GM12878 (cell line): ENCODE measurements at regions of chr5 and their contacts with region 1.

Region 1: GRCh38 chr5:14809369-14810155 is 62.0 kb downstream of the ANKH start:
- DNase-seq: peak; percentile 88
- ATAC-seq: peak; percentile 97
- H3K4me3 ChIP-seq: peak overlapping the region; percentile 50; the same call in 1 of the 2 replicates
- H3K27ac ChIP-seq: peak overlapping the region; percentile 79
- H3K4me1 ChIP-seq: peaks cover 19% of the 10 kb centered on the region
- H3K27me3 ChIP-seq: no peaks in the 10 kb centered on the region
- CTCF ChIP-seq: no peak
- EP300 ChIP-seq: peak; percentile 92 to 96
- POLR2A ChIP-seq: 0 out of 2 replicates have a peak, but pooled peaks have one; percentile 40
- RAD21 ChIP-seq: peak; percentile 20; the same call in 1 of the 2 replicates

Region 2: GRCh38 chr5:14676320-14676719 is 133.2 kb before region 1 on chr5:
- CTCF ChIA-PET with region 1: no interaction called
- POLR2A ChIA-PET with region 1: no interaction called
- RAD21 ChIA-PET with region 1: interaction called, 3 read pairs
- SMC1A ChIA-PET with region 1: interaction called, 4 read pairs
- in situ Hi-C with region 1: no loop called
- intact Hi-C with region 1: loop called (anchors 5 kb)
- DNase-seq: no peak
- ATAC-seq: peak; percentile 67
- H3K4me3 ChIP-seq: peak overlapping the region; percentile 62; the same call in 1 of the 2 replicates
- H3K27ac ChIP-seq: peak overlapping the region; percentile 71
- H3K4me1 ChIP-seq: peaks cover 76% of the 10 kb centered on the region
- H3K27me3 ChIP-seq: no peaks in the 10 kb centered on the region
- CTCF ChIP-seq: no peak
- EP300 ChIP-seq: no peak
- POLR2A ChIP-seq: peak; percentile 37; the same call in 1 of the 2 replicates
- RAD21 ChIP-seq: no peak

Region 3: DNA sequence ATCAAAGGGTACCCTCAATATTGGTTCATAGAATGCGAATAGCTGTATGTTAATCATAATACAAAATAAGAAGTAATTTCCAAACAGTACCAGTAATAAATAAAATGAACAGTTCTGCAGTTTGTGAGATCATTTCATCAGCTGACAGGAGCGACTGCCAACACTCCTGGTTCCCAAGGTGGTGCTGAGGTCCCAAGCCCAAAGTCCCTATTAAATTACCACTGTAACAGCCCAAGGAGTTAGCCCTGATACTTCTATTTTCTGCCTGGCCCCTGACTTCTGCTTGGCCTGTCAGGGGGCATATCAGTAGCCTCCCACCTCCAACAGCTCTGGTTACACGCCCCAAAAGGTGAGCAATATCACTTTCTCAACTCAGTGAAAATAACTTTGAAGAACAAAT is 14.9 kb after region 1 on chr5:
- CTCF ChIA-PET with region 1: interaction called, 4 read pairs
- POLR2A ChIA-PET with region 1: interaction called, 4 read pairs
- RAD21 ChIA-PET with region 1: no interaction called
- SMC1A ChIA-PET with region 1: interaction called, 18 read pairs
- in situ Hi-C with region 1: no loop called
- intact Hi-C with region 1: no loop called
- DNase-seq: no peak
- ATAC-seq: no peak; the same call in 2 of the 3 replicates
- H3K4me3 ChIP-seq: no peak overlapping the region
- H3K27ac ChIP-seq: no peak overlapping the region
- H3K4me1 ChIP-seq: no peaks in the 10 kb centered on the region
- H3K27me3 ChIP-seq: no peaks in the 10 kb centered on the region
- CTCF ChIP-seq: no peak
- EP300 ChIP-seq: no peak
- POLR2A ChIP-seq: no peak
- RAD21 ChIP-seq: no peak

Region 4: DNA sequence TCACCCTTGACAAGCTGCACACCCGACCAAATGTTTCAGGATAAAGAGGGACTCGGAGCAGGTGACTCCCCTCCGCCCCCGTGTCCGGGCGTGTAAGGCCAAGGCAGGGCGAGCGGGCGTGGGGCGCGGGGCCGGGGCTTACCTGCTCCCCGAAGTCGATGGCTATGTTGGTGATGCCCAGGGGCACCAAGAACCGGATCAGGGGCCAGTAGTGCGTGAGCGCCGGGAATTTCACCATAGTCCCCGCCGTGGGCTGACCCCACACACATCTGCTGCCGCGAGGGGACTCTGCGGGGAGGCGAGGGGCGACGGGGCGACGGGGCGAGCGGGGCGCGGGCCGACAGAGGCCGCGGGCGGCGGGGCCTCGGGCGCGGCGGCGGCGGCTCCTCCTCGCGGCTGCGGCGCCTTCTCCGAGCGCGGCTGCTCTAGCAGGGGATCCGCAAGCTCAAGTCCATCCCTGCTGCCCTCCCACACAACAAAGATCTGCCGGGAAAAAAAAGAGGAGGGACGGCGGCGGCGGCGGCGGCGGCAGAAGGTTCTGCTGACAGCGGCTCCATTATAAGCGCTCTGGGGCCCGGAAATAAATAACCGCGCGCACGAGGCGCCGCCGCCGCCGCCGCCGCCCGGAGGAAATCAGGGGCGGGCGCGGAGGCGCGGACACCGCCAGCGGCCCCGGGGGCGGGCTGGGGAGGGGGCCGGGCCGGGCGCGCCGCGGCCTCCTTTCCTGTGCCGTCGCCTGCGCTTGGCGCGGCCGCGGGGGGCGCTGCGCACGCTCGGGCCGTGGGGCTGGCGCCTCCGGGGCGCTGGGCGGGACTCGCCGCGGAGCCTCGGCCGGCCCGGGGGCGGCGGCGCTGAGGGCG is 61.9 kb after region 1 on chr5 and contains the start of gene ANKH:
- CTCF ChIA-PET with region 1: interaction called, 3 read pairs
- POLR2A ChIA-PET with region 1: interaction called, 5 read pairs
- RAD21 ChIA-PET with region 1: interaction called, 7 read pairs
- SMC1A ChIA-PET with region 1: interaction called, 5 read pairs
- in situ Hi-C with region 1: no loop called
- intact Hi-C with region 1: loop called (anchors 1 kb)
- DNase-seq: no peak
- ATAC-seq: peak; percentile 86
- H3K4me3 ChIP-seq: peak within 1 kb of the TSS; percentile 77
- H3K27ac ChIP-seq: no peak within 1 kb of the TSS; the same call in 1 of the 2 replicates
- H3K4me1 ChIP-seq: no peaks in the 10 kb centered on the region
- H3K27me3 ChIP-seq: no peaks in the 10 kb centered on the region
- CTCF ChIP-seq: peak in 2 of 3 experiments; percentile 38 to 57; a peak in 3 of 6 replicates
- EP300 ChIP-seq: no peak
- POLR2A ChIP-seq: peak; percentile 32; the same call in 1 of the 2 replicates
- RAD21 ChIP-seq: peak; percentile 42
- polyA plus RNA-seq, gene ANKH: 3.8 to 5.1 TPM